IMR-90 (cell line): ENCODE measurements at regions of chr19 and their contacts with region 1.

Region 1: DNA sequence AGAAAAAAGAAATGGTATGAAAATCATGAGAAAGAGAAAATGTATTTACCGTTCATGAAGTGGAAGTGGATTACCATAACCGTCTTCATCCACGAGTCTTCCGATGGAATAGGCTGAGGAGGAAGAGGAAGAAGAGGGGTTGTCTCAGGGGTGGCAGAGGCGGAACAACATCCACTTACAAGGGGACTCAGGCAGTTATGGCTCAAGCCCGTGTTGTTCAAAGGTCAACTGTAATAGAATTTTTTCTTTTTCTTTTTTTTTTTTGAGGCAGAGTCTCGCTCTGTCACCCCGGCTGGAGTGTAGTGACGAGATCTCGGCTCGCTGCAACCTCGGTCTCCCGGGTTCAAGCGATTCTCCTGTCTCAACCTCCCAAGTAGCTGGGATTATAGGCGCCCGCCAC is 16.9 kb upstream of the ADGRL1 start:
- DNase-seq: no peak
- ATAC-seq: no peak
- H3K4me3 ChIP-seq: no peak overlapping the region
- H3K27ac ChIP-seq: no peak overlapping the region
- H3K4me1 ChIP-seq: peaks cover 2% of the 10 kb centered on the region
- H3K27me3 ChIP-seq: peaks cover 11% of the 10 kb centered on the region
- CTCF ChIP-seq: no peak
- POLR2A ChIP-seq: no peak
- RAD21 ChIP-seq: no peak

Region 2: DNA sequence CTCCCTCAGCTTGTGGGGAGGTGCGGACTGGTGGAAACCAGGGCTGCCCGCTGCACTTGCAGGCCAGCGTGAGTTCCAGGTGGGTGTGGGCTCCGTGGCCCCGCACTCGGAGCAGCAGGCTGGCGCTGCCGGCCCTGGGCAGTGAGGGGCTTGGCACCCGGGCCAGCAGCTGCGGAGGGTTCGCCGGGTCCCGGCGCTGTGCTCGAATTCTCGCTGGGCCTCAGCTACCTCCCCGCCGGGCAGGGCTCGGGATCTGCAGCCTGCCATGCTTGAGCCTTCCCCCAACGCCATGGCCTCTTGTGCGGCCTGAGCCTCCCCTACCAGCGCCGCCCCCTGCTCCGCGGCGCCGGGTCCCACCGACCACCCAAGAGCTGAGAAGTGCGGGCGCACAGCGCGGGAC is 54.7 kb after region 1 on chr19:
- CTCF ChIA-PET with region 1: no interaction called
- POLR2A ChIA-PET with region 1: no interaction called
- dilution Hi-C with region 1: no loop called
- in situ Hi-C with region 1: no loop called
- intact Hi-C with region 1: loop called (anchors 10 kb)
- DNase-seq: no peak
- ATAC-seq: no peak
- H3K4me3 ChIP-seq: no peak overlapping the region
- H3K27ac ChIP-seq: no peak overlapping the region
- H3K4me1 ChIP-seq: no peaks in the 10 kb centered on the region
- H3K27me3 ChIP-seq: peaks cover 35% of the 10 kb centered on the region
- CTCF ChIP-seq: no peak
- POLR2A ChIP-seq: no peak
- RAD21 ChIP-seq: no peak

Region 3: GRCh38 chr19:14337510-14337909 is 114.6 kb after region 1 on chr19:
- CTCF ChIA-PET with region 1: no interaction called
- POLR2A ChIA-PET with region 1: no interaction called
- dilution Hi-C with region 1: no loop called
- in situ Hi-C with region 1: no loop called
- intact Hi-C with region 1: no loop called
- DNase-seq: no peak
- ATAC-seq: no peak
- H3K4me3 ChIP-seq: no peak overlapping the region
- H3K27ac ChIP-seq: no peak overlapping the region
- H3K4me1 ChIP-seq: no peaks in the 10 kb centered on the region
- H3K27me3 ChIP-seq: peaks cover 3% of the 10 kb centered on the region; the same call in 1 of the 2 replicates
- CTCF ChIP-seq: no peak
- POLR2A ChIP-seq: no peak
- RAD21 ChIP-seq: no peak